ENCODE measurements at regions of chr4 and their contacts with region 1.

Region 1: DNA sequence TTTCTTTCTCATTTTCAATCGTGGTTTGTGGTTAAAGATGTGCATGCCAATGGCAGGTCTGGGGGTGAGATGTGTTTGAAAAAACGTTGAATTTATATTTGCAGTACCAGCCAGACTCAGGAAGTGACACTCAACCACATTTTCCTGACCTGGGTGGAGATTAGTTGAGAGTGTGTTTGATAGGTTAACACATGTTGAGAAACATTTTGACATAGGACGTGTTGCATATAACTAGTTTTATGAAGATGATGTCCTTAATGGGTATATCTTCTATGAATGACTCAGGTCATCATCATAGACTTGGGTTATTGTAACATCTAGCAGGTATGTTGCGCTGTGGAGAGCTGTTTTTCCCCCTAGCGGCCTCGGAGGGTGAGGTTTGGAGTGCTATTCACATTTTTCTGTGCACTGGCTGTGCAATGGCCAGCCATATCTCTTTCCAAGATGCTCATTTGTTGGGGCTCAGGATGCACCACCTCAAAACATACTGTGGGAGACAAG is 21.7 kb upstream of the CD38 start:
- DNase-seq: peak; percentile 35 to 89 (median 62)
- ATAC-seq: peak; percentile 81 to 85 (median 84)
- H3K4me3 ChIP-seq: peak overlapping the region; percentile 31 to 58
- H3K4me3 Mint-ChIP-seq: peak overlapping the region; percentile 55 to 75 (median 63)
- H3K27ac ChIP-seq: peak overlapping the region; percentile 52
- H3K27ac Mint-ChIP-seq: peak overlapping the region; percentile 83 to 85
- H3K4me1 ChIP-seq: peaks cover 42 to 47% of the 10 kb centered on the region in 2 experiments
- H3K4me1 Mint-ChIP-seq: peaks cover 43 to 61% (median 52%) of the 10 kb centered on the region in 3 donors
- H3K27me3 ChIP-seq: no peaks in the 10 kb centered on the region
- H3K27me3 Mint-ChIP-seq: no peaks in the 10 kb centered on the region

Region 2: DNA sequence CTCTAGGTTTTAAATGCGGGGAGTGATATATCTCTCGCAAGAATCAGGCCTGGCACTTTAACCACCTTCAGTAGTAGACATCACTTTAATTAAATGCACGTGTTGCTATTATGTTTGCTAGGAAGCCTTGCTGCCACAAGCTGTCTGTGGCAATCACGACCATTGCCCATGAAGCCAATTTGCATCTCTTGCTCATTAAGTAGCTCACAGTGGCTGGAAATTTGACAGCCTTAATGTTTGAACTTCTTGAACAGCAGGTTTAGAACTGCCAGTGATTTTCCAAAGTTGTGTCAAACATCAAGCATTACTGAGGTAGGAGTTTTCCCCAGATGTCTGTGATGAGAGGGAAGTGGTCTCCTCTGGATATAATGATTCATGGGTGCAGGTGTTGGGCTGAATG is 1396.4 kb before region 1 on chr4:
- CTCF ChIA-PET with region 1: no interaction called
- POLR2A ChIA-PET with region 1: no interaction called
- DNase-seq: no peak
- ATAC-seq: no peak
- H3K4me3 ChIP-seq: no peak overlapping the region
- H3K4me3 Mint-ChIP-seq: no peak overlapping the region
- H3K27ac ChIP-seq: no peak overlapping the region
- H3K27ac Mint-ChIP-seq: no peak overlapping the region
- H3K4me1 ChIP-seq: no peaks in the 10 kb centered on the region
- H3K4me1 Mint-ChIP-seq: no peaks in the 10 kb centered on the region
- H3K27me3 ChIP-seq: no peaks in the 10 kb centered on the region
- H3K27me3 Mint-ChIP-seq: no peaks in the 10 kb centered on the region

Region 3: DNA sequence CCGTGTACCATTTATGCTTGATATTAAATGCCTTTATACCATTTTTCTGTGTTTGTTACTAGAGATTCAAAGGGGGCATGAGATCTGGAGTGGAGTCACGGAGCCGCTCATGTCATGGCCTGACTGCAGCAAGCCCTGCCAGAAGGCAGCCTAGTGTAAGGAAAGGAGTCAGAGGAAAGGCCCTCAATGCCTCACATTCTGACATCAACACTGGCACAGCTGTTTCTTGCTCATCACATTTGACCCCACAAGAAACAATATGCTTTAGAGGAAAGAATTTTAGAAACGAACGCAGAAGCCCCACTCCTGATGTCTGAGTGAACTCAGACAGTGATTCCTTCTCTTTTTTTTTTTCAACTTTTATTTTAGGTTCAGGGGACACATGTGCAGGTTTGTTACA is 1076.5 kb before region 1 on chr4:
- CTCF ChIA-PET with region 1: interaction called in 1 of 2 experiments, 16 read pairs
- POLR2A ChIA-PET with region 1: no interaction called
- DNase-seq: no peak
- ATAC-seq: no peak
- H3K4me3 ChIP-seq: no peak overlapping the region
- H3K4me3 Mint-ChIP-seq: no peak overlapping the region
- H3K27ac ChIP-seq: no peak overlapping the region
- H3K27ac Mint-ChIP-seq: no peak overlapping the region
- H3K4me1 ChIP-seq: no peaks in the 10 kb centered on the region
- H3K4me1 Mint-ChIP-seq: no peaks in the 10 kb centered on the region
- H3K27me3 ChIP-seq: no peaks in the 10 kb centered on the region
- H3K27me3 Mint-ChIP-seq: peaks cover 0 to 8% of the 10 kb centered on the region in 2 donors

Measured in T-cell (primary cell).